Calu3 (cell line): ENCODE measurements at regions of chr18 and their contacts with region 1.

Region 1: DNA sequence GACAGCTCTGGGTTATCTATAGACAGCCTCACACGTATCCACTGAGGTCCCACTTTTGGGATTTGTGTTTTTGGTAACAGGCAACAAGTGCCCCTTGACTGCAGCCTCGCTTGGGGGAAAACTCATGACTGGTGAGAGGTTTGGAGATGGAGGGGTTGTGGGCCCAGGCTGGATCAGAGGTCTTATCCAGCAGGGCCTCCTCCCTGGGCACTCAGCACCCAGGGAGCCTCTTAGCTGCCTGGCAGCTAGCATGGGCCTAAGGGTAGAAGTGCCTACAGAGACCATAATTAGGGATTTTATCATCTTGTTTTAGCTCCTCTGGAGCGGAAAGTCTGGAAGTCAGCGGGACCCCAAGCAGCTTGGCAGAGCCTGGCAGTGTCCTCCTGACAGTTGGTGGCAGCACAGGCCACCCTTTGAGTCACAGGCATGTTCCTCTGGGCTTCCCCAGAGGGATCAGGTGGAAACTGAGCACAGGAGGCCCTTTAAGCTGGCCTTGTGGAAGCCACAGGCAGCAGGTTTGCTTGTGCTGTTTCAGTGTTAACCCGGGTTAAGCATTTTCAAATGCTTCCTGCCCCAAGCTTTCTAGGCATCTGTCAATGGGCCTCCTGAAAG is 143.1 kb downstream of the KCTD1 start:
- DNase-seq: peak; percentile 73
- H3K4me3 Mint-ChIP-seq: no peak overlapping the region
- H3K27ac Mint-ChIP-seq: peak overlapping the region; percentile 16
- H3K4me1 Mint-ChIP-seq: peaks cover 8% of the 10 kb centered on the region
- H3K27me3 Mint-ChIP-seq: no peaks in the 10 kb centered on the region
- CTCF ChIP-seq: peak; percentile 37

Region 2: DNA sequence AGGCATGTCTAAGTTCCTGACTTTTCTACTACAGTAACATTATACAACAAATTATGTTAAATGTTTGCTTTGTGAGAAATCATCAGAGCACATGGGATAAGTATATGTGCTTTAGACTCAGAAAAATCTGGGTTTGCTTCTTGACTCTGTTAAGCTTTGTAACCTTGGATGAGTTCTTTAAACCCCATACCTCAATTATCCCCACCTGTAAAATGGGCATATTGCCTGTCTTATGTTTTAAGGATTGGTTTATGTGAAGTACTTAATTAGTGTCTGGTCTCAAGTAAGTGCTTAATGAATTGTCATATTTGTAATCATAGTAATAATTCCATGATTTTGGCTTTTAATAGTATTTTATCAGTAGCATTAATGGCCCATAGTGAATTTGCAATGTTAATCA is 43.3 kb before region 1 on chr18:
- CTCF ChIA-PET with region 1: no interaction called
- intact Hi-C with region 1: no loop called
- DNase-seq: no peak
- H3K4me3 Mint-ChIP-seq: no peak overlapping the region
- H3K27ac Mint-ChIP-seq: no peak overlapping the region
- H3K4me1 Mint-ChIP-seq: no peaks in the 10 kb centered on the region
- H3K27me3 Mint-ChIP-seq: no peaks in the 10 kb centered on the region
- CTCF ChIP-seq: no peak

Region 3: DNA sequence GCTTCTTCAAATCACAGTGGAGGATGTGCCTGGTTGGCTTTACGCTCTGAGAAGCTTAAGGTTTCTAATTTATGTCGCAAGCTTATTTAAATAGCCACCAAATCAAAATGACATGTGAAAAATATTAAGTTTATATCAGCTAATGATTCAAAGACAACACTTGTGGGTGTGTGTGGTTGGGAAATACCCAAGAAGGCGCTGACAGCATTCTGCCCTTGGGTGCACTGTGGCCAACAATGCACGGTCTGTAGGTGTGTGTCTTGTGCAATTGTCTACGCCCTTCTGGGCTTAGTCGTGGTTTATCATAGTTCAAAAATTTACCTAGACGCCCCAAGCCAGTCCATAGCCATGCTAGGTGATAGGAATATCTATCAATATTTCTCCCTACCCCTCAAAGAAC is 82.1 kb after region 1 on chr18:
- CTCF ChIA-PET with region 1: interaction called, 9 read pairs
- intact Hi-C with region 1: loop called (anchors 10 kb)
- DNase-seq: peak; percentile 86
- H3K4me3 Mint-ChIP-seq: peak overlapping the region; percentile 43
- H3K27ac Mint-ChIP-seq: peak overlapping the region; percentile 91
- H3K4me1 Mint-ChIP-seq: peaks cover 78% of the 10 kb centered on the region
- H3K27me3 Mint-ChIP-seq: no peaks in the 10 kb centered on the region
- CTCF ChIP-seq: no peak

Region 4: DNA sequence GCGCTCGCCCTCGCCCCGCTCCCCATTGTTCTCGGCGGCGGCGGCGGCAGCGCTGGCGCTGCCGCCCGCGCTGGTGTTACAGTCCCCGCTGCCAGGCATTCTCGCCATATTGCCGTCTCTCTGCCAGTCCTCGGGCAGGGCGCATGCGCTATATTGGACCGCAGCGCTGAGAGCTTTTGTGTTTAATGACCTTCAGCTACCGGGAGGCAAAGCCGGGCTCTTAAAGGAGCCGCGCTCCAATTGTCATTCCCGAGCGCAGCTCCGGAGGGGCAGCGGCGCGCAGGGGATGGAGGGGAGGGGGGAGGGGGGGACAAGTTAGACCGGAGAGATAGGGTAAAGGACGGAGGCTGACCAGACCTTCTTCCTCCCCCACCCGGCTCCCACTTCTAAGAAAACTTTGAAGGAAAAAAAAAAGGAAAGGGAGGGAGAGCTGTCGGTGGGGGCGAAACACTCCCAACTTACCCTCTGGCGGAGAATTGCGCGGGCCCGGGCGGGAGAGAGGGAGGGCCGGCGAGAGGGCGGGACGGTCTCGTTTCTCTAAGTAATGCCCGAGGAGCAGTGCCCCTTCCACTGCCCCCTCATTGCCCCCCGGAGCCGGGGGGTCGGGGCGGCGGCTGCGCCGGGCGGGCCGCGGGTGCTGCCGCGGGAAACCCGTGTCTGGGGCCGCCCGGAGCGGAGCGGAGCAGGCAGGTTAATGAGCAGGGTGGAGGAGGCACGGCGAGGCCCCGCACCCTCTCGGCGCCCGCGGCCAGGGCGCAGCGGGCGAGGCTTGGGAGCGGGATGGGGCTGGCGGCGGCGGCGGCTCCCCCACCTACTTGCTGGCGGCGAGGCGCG is 143.3 kb after region 1 on chr18 and contains the start of gene KCTD1:
- CTCF ChIA-PET with region 1: interaction called, 13 read pairs
- intact Hi-C with region 1: loop called (anchors 5 kb)
- DNase-seq: peak; percentile 73
- H3K4me3 Mint-ChIP-seq: peak within 1 kb of the TSS; percentile 80
- H3K27ac Mint-ChIP-seq: peak within 1 kb of the TSS; percentile 67
- H3K4me1 Mint-ChIP-seq: peaks cover 32% of the 10 kb centered on the region
- H3K27me3 Mint-ChIP-seq: no peaks in the 10 kb centered on the region
- CTCF ChIP-seq: no peak
- total RNA-seq, gene KCTD1: 54.1 and 63.2 TPM in 2 replicates

Region 5: DNA sequence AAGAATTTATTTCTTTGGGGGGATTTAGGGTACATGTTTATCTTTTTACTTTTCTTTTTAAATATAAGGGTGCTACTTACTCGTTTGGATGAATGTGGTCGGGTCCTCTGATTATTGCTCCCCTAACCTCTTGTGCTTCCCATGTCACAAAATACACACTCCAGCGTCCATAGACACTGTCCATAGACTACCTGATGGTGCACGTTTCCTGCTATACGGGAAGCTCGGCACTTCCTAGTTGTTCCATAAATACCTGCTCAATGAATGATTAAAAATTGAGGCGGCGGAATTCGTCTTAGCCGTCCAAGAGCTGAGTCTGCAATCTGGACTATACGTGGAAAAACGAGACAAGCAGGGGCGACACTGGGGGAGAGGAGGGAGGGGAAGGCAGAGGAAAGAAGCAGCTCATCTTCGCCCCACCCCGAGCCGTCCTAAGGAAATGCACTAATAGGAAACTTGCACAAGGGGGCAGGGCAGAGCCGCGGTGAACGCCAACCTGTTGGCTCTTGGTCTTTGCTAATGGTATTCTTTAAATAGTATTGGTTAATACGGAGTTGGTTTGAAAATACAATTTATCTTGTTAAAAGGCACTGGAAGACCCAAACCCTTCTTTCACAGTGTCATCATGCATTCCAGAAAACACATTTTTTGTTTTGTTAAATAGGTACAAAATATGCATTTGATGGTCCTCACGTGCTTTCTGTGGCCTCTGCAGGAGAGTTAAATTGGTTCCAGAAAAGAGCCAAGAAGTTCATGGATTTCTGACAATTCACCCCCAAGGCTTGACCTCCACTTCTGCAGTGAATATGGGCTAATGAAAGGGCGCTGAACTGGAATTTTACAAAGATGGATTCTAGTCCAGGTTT is 216.1 kb after region 1 on chr18:
- CTCF ChIA-PET with region 1: interaction called, 13 read pairs
- intact Hi-C with region 1: no loop called
- DNase-seq: peak; percentile 77
- H3K4me3 Mint-ChIP-seq: peak overlapping the region; percentile 55
- H3K27ac Mint-ChIP-seq: no peak overlapping the region
- H3K4me1 Mint-ChIP-seq: peaks cover 14% of the 10 kb centered on the region
- H3K27me3 Mint-ChIP-seq: no peaks in the 10 kb centered on the region
- CTCF ChIP-seq: peak; percentile 81